Natural killer cell (primary cell): ENCODE measurements at regions of chr7 and their contacts with region 1.

Region 1: DNA sequence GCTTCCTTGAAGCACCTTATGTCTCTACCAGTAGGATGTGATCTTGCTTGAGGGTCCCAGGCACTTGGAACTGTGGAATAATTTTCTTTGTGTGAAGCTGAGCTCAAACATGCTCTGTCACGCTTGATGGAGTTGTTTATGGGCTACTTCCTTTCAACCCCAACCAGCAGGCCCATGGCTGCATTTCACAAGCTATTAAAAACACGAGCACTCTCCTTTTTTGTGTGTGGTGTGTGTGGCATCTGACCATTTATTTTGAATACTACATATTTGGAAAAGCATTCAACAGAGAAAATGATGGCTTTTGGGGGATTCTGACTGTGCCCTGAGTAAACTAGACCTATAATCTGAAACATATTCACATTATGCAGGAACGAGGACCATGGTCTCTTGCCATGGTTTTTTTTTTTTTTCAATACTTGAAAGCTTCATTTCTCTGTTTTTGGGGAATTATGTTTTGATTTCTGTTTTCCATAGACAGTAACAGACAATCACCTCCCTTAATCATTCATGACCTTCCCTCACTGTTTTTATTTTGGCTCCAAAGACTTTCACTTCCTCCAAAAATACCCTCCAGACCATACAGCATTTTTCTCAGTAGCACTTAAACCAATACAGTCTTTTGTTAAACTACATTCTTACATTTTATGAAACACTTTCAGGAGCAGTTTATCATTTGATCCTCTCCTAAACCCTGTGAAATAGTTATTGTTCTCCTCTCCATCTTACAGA is 233.6 kb upstream of the BMPER start:
- DNase-seq: no peak
- ATAC-seq: no peak
- H3K4me3 ChIP-seq: no peak overlapping the region
- H3K4me3 Mint-ChIP-seq: no peak overlapping the region
- H3K27ac ChIP-seq: no peak overlapping the region
- H3K27ac Mint-ChIP-seq: no peak overlapping the region
- H3K4me1 ChIP-seq: no peaks in the 10 kb centered on the region
- H3K4me1 Mint-ChIP-seq: peaks cover 18 to 30% of the 10 kb centered on the region in 2 donors
- H3K27me3 ChIP-seq: no peaks in the 10 kb centered on the region
- H3K27me3 Mint-ChIP-seq: no peaks in the 10 kb centered on the region
- CTCF ChIP-seq: no peak

Region 2: DNA sequence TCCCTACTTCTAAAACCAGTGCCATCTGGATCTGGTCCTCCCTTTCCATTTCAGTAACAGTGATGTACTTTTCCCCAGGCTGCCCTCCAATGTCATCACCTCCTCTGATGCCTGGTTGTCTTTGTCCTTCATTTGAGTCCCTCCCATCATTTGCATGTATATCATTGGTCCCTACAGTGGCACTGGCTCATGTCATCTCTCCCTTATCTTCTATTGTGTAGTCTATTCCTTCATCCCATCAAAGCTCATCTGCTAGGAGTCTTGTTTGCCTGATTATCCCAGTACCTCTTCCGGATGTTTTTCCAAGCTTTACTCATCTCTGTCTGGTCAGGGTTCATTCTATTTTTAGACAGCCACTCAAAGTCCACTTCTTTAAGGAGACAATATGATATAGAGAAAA is 59.3 kb before region 1 on chr7:
- intact Hi-C with region 1: loop called (anchors 10 kb)
- DNase-seq: no peak
- ATAC-seq: no peak
- H3K4me3 ChIP-seq: no peak overlapping the region
- H3K4me3 Mint-ChIP-seq: no peak overlapping the region
- H3K27ac ChIP-seq: no peak overlapping the region
- H3K27ac Mint-ChIP-seq: no peak overlapping the region
- H3K4me1 ChIP-seq: no peaks in the 10 kb centered on the region
- H3K4me1 Mint-ChIP-seq: peaks cover 0 to 10% of the 10 kb centered on the region in 2 donors
- H3K27me3 ChIP-seq: no peaks in the 10 kb centered on the region
- H3K27me3 Mint-ChIP-seq: no peaks in the 10 kb centered on the region
- CTCF ChIP-seq: no peak

Region 3: DNA sequence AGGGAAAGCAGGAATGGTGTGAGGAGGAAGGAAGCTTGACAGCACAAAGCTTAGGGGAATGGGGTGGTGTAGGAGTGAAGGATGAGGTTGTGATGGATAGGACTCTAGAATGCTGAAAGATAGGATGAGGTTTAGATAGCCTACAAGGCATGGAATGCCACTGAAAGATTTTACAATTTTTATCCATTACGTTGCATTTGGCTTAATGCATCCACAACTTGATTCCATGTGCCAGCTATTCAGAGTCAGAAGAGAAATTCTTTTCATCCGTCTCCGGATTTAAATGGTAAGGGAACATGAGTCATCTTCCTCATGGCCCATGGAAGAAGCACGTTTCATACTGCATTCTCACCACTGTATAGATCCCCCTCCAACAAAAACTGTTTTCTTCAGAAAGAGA is 21.3 kb after region 1 on chr7:
- intact Hi-C with region 1: no loop called
- DNase-seq: no peak
- ATAC-seq: no peak
- H3K4me3 ChIP-seq: no peak overlapping the region
- H3K4me3 Mint-ChIP-seq: no peak overlapping the region
- H3K27ac ChIP-seq: no peak overlapping the region
- H3K27ac Mint-ChIP-seq: no peak overlapping the region
- H3K4me1 ChIP-seq: no peaks in the 10 kb centered on the region
- H3K4me1 Mint-ChIP-seq: peaks cover 15 to 18% of the 10 kb centered on the region in 2 donors
- H3K27me3 ChIP-seq: no peaks in the 10 kb centered on the region
- H3K27me3 Mint-ChIP-seq: no peaks in the 10 kb centered on the region
- CTCF ChIP-seq: no peak

Region 4: GRCh38 chr7:34958021-34958420 is 1286.3 kb after region 1 on chr7:
- intact Hi-C with region 1: no loop called
- DNase-seq: no peak
- ATAC-seq: no peak
- H3K4me3 ChIP-seq: no peak overlapping the region
- H3K4me3 Mint-ChIP-seq: no peak overlapping the region
- H3K27ac ChIP-seq: no peak overlapping the region
- H3K27ac Mint-ChIP-seq: peak overlapping the region in 1 of 2 donors; percentile 59
- H3K4me1 ChIP-seq: no peaks in the 10 kb centered on the region
- H3K4me1 Mint-ChIP-seq: peaks cover 12 to 20% of the 10 kb centered on the region in 2 donors
- H3K27me3 ChIP-seq: no peaks in the 10 kb centered on the region
- H3K27me3 Mint-ChIP-seq: no peaks in the 10 kb centered on the region
- CTCF ChIP-seq: no peak